Panc1 (cell line): ENCODE measurements at regions of chr12 and their contacts with region 1.

Region 1: GRCh38 chr12:56602239-56602638 is 27.9 kb downstream of the BAZ2A start:
- DNase-seq: no peak
- ATAC-seq: no peak
- H3K4me3 ChIP-seq: no peak overlapping the region
- H3K27ac ChIP-seq: no peak overlapping the region
- H3K4me1 ChIP-seq: no peaks in the 10 kb centered on the region; the same call in 1 of the 2 replicates
- H3K27me3 ChIP-seq: no peaks in the 10 kb centered on the region
- CTCF ChIP-seq: no peak

Region 2: DNA sequence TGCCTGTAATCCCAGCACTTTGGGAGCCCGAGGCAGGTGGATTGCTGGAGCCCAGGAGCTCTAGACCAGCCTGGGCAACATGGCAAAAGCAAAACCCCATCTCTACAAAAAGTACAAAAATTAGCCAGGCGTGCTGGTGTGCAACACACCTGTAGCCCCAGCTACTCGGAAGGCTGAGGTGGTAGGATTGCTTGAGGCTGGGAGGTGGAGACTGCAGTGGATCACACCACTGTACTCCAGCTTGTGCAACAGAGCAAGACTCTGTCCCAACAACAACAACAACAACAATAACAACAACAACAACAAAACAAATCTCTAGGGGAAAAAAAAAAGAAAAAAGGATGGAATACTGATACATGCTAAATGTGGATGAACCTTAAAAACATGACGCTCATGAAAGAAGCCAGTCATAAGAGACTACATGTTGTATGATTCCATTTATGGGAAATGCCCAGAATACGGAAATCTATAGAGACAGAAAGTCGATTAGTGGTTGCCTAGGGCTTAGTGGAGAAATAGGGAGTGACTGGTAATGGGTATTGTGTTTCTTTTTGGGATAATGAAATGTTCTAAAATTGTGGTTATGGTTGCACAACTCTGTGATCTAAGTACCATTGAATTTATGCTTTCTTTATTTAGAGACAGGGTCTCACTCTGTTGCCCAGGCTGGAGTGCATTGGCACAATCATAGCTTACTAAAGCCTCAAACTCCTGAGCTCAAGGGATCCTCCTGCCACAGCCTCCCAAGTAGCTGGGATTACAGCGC is 72.8 kb before region 1 on chr12:
- CTCF ChIA-PET with region 1: no interaction called
- POLR2A ChIA-PET with region 1: interaction called, 14 read pairs
- in situ Hi-C with region 1: no loop called
- intact Hi-C with region 1: no loop called
- DNase-seq: no peak
- ATAC-seq: no peak
- H3K4me3 ChIP-seq: no peak overlapping the region
- H3K27ac ChIP-seq: no peak overlapping the region
- H3K4me1 ChIP-seq: peaks cover 9% of the 10 kb centered on the region; the same call in 1 of the 2 replicates
- H3K27me3 ChIP-seq: no peaks in the 10 kb centered on the region
- CTCF ChIP-seq: no peak

Region 3: DNA sequence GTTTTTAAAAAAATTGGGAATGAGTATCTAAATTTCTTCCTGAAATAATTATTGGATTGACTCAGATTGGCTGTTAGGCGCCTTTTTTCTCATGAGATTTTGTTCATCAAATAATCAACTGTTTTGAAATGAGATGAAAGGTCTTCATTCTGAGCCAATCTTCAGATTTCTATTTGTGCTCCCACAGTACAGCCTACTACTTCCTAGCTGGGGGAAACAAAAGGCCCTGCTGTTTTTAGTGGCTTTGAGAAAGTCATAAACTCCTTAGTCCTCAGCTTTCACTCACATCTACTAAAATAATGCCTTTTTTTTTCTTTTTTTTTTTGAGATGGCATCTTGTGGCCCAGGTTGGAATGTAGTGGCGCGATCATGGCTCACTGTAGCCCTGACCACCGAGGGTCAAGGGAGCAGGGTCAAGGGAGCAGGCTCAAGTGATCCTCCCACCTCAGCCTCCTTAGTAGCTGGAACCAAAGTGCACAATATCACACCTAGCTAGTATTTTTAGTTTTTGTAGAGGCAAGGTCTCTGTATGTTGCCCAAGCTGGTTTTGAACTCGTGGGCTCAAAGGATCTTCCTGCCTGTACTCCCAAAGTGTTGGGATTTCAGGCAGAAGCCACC is 107.6 kb after region 1 on chr12:
- CTCF ChIA-PET with region 1: no interaction called
- POLR2A ChIA-PET with region 1: no interaction called
- in situ Hi-C with region 1: no loop called
- intact Hi-C with region 1: no loop called
- DNase-seq: no peak
- ATAC-seq: 0 out of 2 replicates have a peak, but pooled peaks have one; percentile 40
- H3K4me3 ChIP-seq: no peak overlapping the region
- H3K27ac ChIP-seq: no peak overlapping the region
- H3K4me1 ChIP-seq: no peaks in the 10 kb centered on the region
- H3K27me3 ChIP-seq: no peaks in the 10 kb centered on the region
- CTCF ChIP-seq: no peak